B cell (primary cell): ENCODE measurements at regions of chr22 and their contacts with region 1.

Region 1: GRCh38 chr22:50030297-50031188 is 18.0 kb upstream of the IL17REL start:
- DNase-seq: peak; percentile 87
- ATAC-seq: peak; percentile 96
- H3K4me3 ChIP-seq: peak overlapping the region in 3 of 5 experiments; percentile 20 to 35 (median 23)
- H3K4me3 Mint-ChIP-seq: no peak overlapping the region
- H3K27ac ChIP-seq: no peak overlapping the region
- H3K27ac Mint-ChIP-seq: no peak overlapping the region
- H3K4me1 ChIP-seq: peaks cover 22 to 24% of the 10 kb centered on the region in 2 donors
- H3K4me1 Mint-ChIP-seq: peaks cover 16% of the 10 kb centered on the region
- H3K27me3 ChIP-seq: peaks cover 0 to 13% (median 6%) of the 10 kb centered on the region in 4 experiments
- H3K27me3 Mint-ChIP-seq: peaks cover 7% of the 10 kb centered on the region
- CTCF ChIP-seq: peak; percentile 92

Region 2: DNA sequence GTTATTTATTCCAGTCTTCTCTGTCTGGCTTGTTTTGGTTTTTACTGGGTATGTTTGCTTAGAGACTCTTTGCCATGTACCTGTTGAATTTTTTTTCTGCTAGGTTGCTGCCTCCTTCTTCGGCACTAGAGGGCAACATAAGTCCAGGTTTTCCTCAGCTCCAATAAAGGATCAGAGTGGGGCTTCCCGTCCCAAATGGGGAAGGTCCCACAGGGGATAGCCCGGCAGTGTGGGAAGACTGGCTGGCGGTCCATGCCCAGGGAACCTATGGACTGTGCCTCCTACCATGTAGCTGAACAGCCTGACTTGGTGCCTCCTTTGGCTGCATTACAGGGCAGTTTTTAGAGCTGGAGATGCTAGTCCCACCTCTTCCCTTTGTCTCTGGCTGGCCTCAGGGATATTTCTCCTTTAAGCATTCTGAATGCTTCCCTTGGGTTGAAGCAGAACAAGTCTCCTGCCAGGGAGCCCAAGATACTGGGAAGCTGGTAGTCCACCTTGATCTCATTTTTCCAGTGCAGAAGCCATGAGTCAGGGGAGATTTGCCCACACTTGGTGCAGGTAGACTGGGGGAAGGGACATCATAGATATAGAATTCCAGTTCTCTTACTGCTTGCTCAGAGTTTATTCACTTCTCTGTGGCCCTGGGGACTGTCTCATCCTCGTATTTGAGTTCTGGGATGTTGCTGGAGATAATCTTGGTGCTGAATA is 263.0 kb before region 1 on chr22:
- CTCF ChIA-PET with region 1: interaction called, 40 read pairs
- POLR2A ChIA-PET with region 1: interaction called, 3 read pairs
- intact Hi-C with region 1: no loop called
- DNase-seq: peak; percentile 65
- ATAC-seq: peak; percentile 59
- H3K4me3 ChIP-seq: no peak overlapping the region
- H3K4me3 Mint-ChIP-seq: no peak overlapping the region
- H3K27ac ChIP-seq: no peak overlapping the region
- H3K27ac Mint-ChIP-seq: no peak overlapping the region
- H3K4me1 ChIP-seq: no peaks in the 10 kb centered on the region
- H3K4me1 Mint-ChIP-seq: peaks cover 4% of the 10 kb centered on the region
- H3K27me3 ChIP-seq: no peaks in the 10 kb centered on the region
- H3K27me3 Mint-ChIP-seq: no peaks in the 10 kb centered on the region
- CTCF ChIP-seq: peak; percentile 79

Region 3: DNA sequence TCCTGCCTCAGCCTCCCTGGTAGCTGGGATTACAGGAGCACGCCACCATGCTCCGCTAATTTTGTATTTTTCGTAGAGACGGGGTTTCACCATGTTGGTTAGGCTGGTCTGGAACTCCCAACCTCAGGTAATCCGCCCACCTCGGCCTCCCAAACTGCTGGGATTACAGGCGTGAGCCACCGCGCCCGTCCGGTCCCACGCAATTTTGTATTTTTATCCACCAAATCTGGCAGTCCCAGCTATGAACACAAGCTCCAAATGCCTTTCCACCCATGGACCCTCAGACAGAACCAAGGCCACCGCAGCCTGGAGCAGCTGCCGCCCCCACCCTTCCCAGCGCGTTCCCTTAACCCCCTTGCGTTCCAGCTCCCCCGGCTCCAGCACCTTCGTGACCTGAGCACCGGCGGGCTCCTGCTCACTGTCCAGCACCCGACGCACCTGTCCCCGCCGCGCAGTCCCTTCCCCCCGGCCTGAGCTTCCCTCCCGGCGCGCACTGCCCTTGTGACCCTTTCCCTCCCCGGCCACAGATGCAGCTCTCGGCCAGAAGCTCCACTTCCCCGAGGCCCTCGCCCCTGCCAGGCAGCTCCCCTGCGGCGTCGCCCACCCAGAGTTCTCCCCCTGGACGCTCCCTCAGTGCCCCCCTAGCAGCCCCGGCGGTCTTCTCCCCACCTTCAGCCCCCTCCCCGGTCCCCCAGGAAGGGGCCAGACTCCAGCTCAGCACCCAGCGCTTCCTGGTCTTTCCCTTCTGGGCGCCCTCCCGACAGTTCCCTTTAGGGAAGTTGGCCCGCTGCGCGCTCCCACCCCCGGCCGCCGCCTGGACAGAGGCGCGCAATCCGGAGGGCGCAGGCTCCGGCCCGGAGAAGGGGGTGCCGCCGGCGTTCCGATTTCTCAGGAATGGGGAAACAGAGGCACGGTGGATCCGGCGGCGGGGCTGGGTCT is 182.5 kb before region 1 on chr22:
- CTCF ChIA-PET with region 1: no interaction called
- POLR2A ChIA-PET with region 1: no interaction called
- intact Hi-C with region 1: no loop called
- DNase-seq: peak; percentile 35
- ATAC-seq: no peak
- H3K4me3 ChIP-seq: peak overlapping the region in 2 of 5 experiments; percentile 38 to 39
- H3K4me3 Mint-ChIP-seq: peak overlapping the region; percentile 49
- H3K27ac ChIP-seq: no peak overlapping the region
- H3K27ac Mint-ChIP-seq: no peak overlapping the region
- H3K4me1 ChIP-seq: peaks cover 22 to 31% of the 10 kb centered on the region in 2 donors
- H3K4me1 Mint-ChIP-seq: peaks cover 22% of the 10 kb centered on the region
- H3K27me3 ChIP-seq: peaks cover 0 to 40% (median 21%) of the 10 kb centered on the region in 4 experiments
- H3K27me3 Mint-ChIP-seq: peaks cover 35% of the 10 kb centered on the region
- CTCF ChIP-seq: no peak

Region 4: DNA sequence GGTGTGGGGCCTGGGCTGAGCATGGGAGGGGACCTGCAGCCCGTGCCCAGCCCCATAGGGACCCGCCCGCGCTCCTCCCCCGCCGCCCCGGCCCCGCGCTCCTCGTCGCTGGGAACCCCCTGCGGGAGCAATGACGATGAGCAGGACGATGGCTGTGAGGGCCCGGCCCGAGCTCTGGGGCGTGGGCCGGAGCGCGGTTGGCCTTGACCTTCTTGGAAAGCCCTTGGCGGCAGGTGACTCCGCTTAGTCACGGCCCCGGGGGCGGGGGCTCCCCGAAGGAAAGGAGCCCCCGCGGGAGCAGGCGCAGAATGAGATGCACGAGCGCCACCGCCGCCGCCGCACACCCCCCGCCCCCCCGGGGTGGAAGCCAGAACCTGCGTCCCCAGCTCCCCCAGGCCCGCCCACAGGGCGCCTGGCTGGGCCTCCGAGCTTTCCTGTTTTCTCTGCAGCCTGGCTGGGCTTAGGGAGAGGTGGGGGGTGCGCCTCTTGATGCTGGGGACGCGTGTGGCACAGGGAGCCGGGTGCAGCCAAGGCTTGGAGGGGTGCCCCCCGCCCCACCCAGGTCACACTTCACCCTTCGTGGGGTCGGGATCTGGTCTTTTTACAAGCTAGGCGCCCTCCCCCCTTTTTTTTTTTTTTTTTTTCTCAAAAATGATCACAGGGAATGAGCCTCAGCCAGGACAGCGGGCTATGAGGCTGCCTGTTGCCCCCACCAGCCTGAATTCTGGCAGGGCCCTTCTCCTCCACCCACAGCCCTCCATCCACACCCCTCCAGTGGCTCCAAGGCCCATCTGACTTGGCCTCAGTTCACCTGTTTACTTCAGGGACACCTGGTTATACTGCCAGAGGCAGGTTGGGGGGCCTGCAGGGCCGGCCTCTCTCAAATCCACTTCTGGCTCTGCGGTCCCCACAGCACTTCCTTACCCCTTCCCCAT is 94.3 kb before region 1 on chr22:
- CTCF ChIA-PET with region 1: interaction called, 127 read pairs
- POLR2A ChIA-PET with region 1: interaction called, 20 read pairs
- intact Hi-C with region 1: loop called (anchors 1 kb)
- DNase-seq: peak; percentile 98
- ATAC-seq: peak; percentile 73
- H3K4me3 ChIP-seq: peak overlapping the region in 4 of 5 experiments; percentile 41 to 56 (median 50)
- H3K4me3 Mint-ChIP-seq: peak overlapping the region; percentile 66
- H3K27ac ChIP-seq: peak overlapping the region; percentile 91 to 92
- H3K27ac Mint-ChIP-seq: peak overlapping the region; percentile 82
- H3K4me1 ChIP-seq: peaks cover 41 to 53% of the 10 kb centered on the region in 2 donors
- H3K4me1 Mint-ChIP-seq: peaks cover 27% of the 10 kb centered on the region
- H3K27me3 ChIP-seq: no peaks in the 10 kb centered on the region
- H3K27me3 Mint-ChIP-seq: no peaks in the 10 kb centered on the region
- CTCF ChIP-seq: no peak

Region 5: DNA sequence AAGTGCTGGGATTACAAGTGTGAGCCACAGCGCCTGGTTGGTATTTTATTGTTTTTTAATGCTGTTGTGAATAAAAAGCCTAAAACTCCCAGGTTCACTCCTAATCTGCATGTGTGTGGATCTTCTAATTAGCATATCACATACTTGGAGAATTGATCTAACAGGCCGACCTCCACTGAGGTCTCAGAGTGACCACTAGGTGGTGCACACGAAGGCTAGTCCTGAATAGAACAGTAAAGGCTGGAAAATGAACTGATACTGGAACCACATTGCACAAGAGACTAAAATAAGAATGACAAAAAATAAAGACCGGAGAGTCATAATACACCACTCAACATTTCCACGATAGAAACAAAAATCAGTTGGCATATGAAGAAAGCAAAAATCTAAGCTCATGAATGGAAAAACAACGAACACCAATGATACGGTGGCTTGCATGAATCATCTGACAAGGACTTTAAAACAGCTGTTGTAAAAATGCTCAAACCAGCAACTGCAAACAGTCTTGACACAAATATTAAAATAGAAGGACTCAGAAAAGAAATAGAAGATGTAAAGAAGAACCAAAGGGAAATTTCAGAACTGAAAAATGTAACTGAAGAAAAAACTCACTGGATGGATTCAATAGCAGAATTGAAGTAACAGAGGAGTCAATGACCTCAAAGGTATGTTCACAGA is 50.8 kb before region 1 on chr22:
- CTCF ChIA-PET with region 1: interaction called, 11 read pairs
- POLR2A ChIA-PET with region 1: no interaction called
- intact Hi-C with region 1: no loop called
- DNase-seq: peak; percentile 52
- ATAC-seq: no peak
- H3K4me3 ChIP-seq: no peak overlapping the region
- H3K4me3 Mint-ChIP-seq: no peak overlapping the region
- H3K27ac ChIP-seq: no peak overlapping the region
- H3K27ac Mint-ChIP-seq: no peak overlapping the region
- H3K4me1 ChIP-seq: peaks cover 28 to 37% of the 10 kb centered on the region in 2 donors
- H3K4me1 Mint-ChIP-seq: peaks cover 29% of the 10 kb centered on the region
- H3K27me3 ChIP-seq: peaks cover 0 to 11% (median 5%) of the 10 kb centered on the region in 4 experiments
- H3K27me3 Mint-ChIP-seq: peaks cover 14% of the 10 kb centered on the region
- CTCF ChIP-seq: peak; percentile 51

Region 6: GRCh38 chr22:50016988-50017700 is 13.4 kb before region 1 on chr22:
- CTCF ChIA-PET with region 1: interaction called, 16 read pairs
- POLR2A ChIA-PET with region 1: interaction called, 6 read pairs
- intact Hi-C with region 1: no loop called
- DNase-seq: peak; percentile 23
- ATAC-seq: peak; percentile 62
- H3K4me3 ChIP-seq: no peak overlapping the region
- H3K4me3 Mint-ChIP-seq: peak overlapping the region; percentile 34
- H3K27ac ChIP-seq: no peak overlapping the region
- H3K27ac Mint-ChIP-seq: no peak overlapping the region
- H3K4me1 ChIP-seq: peaks cover 44 to 48% of the 10 kb centered on the region in 2 donors
- H3K4me1 Mint-ChIP-seq: peaks cover 43% of the 10 kb centered on the region
- H3K27me3 ChIP-seq: peaks cover 0 to 32% (median 9%) of the 10 kb centered on the region in 4 experiments
- H3K27me3 Mint-ChIP-seq: peaks cover 3% of the 10 kb centered on the region
- CTCF ChIP-seq: no peak

Region 7: GRCh38 chr22:50399751-50400331 is 369.3 kb after region 1 on chr22:
- CTCF ChIA-PET with region 1: no interaction called
- POLR2A ChIA-PET with region 1: no interaction called
- intact Hi-C with region 1: no loop called
- DNase-seq: peak; percentile 44
- ATAC-seq: peak; percentile 65
- H3K4me3 ChIP-seq: no peak overlapping the region
- H3K4me3 Mint-ChIP-seq: peak overlapping the region; percentile 66
- H3K27ac ChIP-seq: peak overlapping the region; percentile 45 to 47
- H3K27ac Mint-ChIP-seq: peak overlapping the region; percentile 88
- H3K4me1 ChIP-seq: peaks cover 30 to 44% of the 10 kb centered on the region in 2 donors
- H3K4me1 Mint-ChIP-seq: peaks cover 44% of the 10 kb centered on the region
- H3K27me3 ChIP-seq: no peaks in the 10 kb centered on the region
- H3K27me3 Mint-ChIP-seq: no peaks in the 10 kb centered on the region
- CTCF ChIP-seq: no peak